ENCODE measurements at regions of chr11 and their contacts with region 1.

Region 1: DNA sequence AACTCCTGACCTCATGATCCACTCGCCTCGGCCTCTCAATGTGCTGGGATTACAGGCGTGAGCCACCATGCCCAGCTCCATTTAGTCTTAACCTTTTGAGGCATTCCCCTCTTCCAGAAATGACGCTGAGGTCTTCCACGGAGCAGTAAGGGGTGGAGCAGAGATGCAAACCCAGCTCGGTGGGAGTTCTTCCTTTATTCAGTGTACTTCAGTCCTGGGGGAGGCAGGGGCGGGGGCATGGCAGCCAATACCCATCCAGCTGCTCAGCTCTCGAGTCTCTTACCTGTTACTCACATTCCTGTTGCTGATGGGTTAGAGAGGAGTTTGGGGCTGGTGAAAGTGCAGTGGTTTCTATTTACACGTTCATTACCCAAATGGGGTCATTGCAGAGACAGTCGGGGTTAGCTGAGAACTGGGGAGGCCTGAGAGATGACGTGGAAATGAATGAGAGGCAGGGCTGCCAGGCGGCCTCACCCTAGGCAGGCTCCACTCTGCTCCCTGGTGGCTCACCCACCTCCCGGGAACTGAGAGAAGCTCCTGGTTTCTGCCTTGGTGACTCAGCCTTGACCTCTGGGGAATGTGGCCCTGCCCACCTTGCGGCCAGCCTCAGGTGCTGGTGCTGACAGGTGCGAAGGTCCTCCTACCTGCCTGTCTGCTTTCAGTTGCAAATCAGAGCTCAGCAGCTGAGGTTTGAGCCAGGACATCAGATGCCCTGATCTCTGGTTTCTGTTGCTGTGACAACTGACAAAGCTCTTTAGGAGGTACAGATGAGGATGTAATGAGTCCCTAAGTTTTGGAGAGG is 13.4 kb upstream of the ST14 start:
- DNase-seq: no peak
- ATAC-seq: peak; percentile 25
- H3K4me3 Mint-ChIP-seq: no peak overlapping the region
- H3K27ac Mint-ChIP-seq: peak overlapping the region; percentile 80
- H3K4me1 Mint-ChIP-seq: peaks cover 45% of the 10 kb centered on the region
- H3K27me3 Mint-ChIP-seq: no peaks in the 10 kb centered on the region
- CTCF ChIP-seq: no peak

Region 2: GRCh38 chr11:130166457-130166784 is 20.2 kb after region 1 on chr11:
- CTCF ChIA-PET with region 1: no interaction called
- POLR2A ChIA-PET with region 1: interaction called, 8 read pairs
- intact Hi-C with region 1: loop called (anchors 1 kb)
- DNase-seq: peak; percentile 48
- ATAC-seq: peak; percentile 87
- H3K4me3 Mint-ChIP-seq: peak overlapping the region; percentile 66
- H3K27ac Mint-ChIP-seq: peak overlapping the region; percentile 93
- H3K4me1 Mint-ChIP-seq: peaks cover 84% of the 10 kb centered on the region
- H3K27me3 Mint-ChIP-seq: no peaks in the 10 kb centered on the region
- CTCF ChIP-seq: no peak

Region 3: DNA sequence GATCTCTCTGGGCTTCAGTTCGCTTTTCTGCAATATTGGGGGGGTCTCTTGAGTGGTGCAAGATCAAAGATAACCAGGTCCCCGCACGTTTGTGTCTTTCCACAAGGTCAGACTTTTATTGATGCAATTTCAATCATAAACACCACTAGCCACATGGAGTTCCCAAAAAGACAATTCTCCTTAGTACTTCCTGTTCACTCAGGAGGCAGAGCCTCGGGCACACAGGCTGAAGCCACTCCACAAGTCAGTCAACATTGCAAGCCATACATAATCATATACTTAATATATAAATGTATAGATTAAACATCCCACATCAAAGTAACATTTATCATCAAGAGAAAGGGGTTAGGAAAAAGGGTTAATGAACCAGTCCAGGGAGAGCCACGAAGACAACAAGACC is 25.4 kb after region 1 on chr11:
- CTCF ChIA-PET with region 1: no interaction called
- POLR2A ChIA-PET with region 1: interaction called, 14 read pairs
- intact Hi-C with region 1: loop called (anchors 1 kb)
- DNase-seq: no peak
- ATAC-seq: no peak
- H3K4me3 Mint-ChIP-seq: no peak overlapping the region
- H3K27ac Mint-ChIP-seq: no peak overlapping the region
- H3K4me1 Mint-ChIP-seq: peaks cover 56% of the 10 kb centered on the region
- H3K27me3 Mint-ChIP-seq: no peaks in the 10 kb centered on the region
- CTCF ChIP-seq: no peak

Region 4: DNA sequence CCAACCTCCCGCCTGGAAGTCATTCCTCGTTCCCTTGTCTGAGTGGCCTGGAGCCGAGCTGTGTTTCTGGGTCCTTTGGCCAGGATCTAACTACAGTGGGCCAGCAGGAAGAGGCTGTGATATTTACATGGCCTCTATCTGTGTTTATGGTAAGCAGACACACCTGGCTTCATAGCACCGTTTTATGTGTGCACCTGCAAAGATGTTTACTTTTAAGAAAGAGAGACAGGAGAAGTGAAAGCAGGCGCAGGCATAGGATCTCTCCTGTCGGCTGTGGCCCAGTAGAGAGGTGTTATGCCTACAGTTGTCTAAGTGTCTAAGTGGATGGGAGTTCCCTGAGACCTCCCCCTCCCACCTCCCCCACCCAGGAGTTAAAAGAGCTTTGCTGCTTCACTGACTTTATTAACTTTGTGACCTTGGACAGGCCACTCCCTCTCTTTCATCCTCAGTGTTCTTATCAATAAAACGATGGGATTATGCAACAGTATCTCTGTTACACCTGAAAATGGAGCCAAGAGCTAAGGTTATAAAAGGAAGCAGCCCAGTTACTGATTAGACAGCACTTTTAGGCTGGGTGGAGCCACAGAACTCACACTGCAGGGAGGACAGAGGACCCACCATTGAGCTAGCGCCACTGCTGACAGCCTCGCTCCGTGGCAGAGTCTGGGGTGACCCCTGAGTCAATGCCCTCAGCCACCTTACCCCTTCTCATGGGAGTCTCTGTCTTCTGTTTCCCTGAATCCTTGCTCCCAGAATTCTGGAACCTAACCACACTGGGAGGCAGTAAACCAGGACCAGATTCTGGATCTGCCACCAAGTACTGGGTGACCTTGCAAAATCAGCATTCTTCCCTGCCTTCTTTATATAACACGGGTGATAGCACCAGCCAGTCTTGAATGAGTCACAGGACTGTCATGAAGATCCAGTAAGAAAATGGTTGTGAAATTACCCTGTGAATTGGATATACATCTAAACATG is 35.4 kb after region 1 on chr11:
- CTCF ChIA-PET with region 1: no interaction called
- POLR2A ChIA-PET with region 1: no interaction called
- intact Hi-C with region 1: loop called (anchors 2 kb)
- DNase-seq: no peak
- ATAC-seq: peak; percentile 61
- H3K4me3 Mint-ChIP-seq: peak overlapping the region; percentile 21
- H3K27ac Mint-ChIP-seq: peak overlapping the region; percentile 75
- H3K4me1 Mint-ChIP-seq: peaks cover 52% of the 10 kb centered on the region
- H3K27me3 Mint-ChIP-seq: no peaks in the 10 kb centered on the region
- CTCF ChIP-seq: no peak